Heart left ventricle (tissue), 16 donors: ENCODE measurements at regions of chr1 and their contacts with region 1.

Region 1: DNA sequence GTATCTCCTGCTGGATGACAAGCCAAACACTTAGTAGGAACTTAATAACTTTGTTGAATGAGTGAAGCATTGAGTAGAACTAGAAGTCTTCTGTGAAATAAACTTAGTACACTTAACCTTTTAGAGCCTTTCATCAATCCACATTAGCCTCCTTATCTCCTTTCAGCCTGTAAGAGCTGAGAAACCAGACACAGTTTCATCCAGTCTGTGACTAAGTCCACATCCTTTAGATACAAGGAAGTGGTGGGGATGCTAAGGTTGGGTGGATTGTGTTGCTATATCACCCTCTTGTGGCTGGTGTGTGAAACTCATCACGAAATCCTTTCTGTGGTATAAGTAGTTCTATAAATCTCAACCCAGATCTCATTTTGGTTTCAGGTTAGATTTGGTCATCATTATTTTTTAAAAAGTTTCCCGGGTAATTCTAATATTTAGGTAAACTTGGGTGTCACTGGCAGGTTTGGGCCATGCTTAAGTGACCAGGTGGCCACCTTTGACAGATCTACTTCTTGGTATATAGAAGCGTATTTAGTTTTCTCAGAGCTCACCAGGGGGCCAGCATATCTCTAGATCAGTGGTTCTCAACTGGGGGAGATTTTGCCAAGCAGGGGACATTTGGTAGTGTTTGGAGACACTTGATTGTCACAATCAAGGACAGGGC is 27.8 kb upstream of the CD84 start:
- DNase-seq: peak in 1 of 5 donors; percentile 38
- ATAC-seq: peak; percentile 58 to 87 (median 78)
- H3K4me3 ChIP-seq: no peak overlapping the region
- H3K27ac ChIP-seq: no peak overlapping the region
- H3K4me1 ChIP-seq: peaks cover 0 to 20% (median 0%) of the 10 kb centered on the region in 12 donors
- H3K27me3 ChIP-seq: peaks cover 0 to 3% (median 0%) of the 10 kb centered on the region in 9 donors
- CTCF ChIP-seq: peak; percentile 50 to 72 (median 62)
- POLR2A ChIP-seq: no peak

Region 2: DNA sequence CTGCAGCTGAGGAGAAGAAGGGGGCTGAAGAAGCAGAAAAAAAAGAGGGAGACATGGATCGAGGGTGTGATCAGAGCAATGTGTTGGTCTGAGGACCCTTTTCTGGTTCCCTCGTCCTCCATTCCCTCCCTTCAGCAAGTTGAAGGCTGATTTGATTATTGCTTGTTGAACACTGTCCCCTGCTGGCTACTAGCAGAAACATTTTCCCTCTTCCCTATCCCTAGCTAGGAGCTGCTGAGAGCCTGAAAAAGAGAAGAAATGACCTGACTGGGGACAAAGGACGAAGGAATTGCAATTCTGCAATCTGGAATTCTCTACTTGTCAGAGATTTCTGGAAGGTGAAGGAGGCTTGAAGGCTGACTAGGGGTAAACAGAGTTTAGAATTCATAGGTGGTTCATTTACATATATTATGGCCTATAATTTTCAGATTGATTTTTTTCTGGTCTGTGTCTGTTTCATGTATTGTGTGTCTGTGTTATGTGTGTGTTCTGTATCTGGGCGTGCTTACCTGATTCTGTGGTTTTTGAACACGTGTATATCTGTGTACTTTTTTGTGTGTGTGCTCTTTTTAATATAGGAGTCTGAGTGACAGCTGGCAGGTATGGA is 230.5 kb before region 1 on chr1:
- intact Hi-C with region 1: loop called in 1 of 10 experiments (anchors 2 kb)
- DNase-seq: no peak
- ATAC-seq: peak; percentile 56 to 86 (median 80)
- H3K4me3 ChIP-seq: peak overlapping the region in 1 of 12 donors; percentile 20
- H3K27ac ChIP-seq: peak overlapping the region in 4 of 12 donors; percentile 11 to 42 (median 40)
- H3K4me1 ChIP-seq: peaks cover 0 to 23% (median 10%) of the 10 kb centered on the region in 12 donors
- H3K27me3 ChIP-seq: peaks cover 0 to 3% (median 0%) of the 10 kb centered on the region in 9 donors
- CTCF ChIP-seq: peak; percentile 68 to 95 (median 88)
- POLR2A ChIP-seq: no peak

Region 3: DNA sequence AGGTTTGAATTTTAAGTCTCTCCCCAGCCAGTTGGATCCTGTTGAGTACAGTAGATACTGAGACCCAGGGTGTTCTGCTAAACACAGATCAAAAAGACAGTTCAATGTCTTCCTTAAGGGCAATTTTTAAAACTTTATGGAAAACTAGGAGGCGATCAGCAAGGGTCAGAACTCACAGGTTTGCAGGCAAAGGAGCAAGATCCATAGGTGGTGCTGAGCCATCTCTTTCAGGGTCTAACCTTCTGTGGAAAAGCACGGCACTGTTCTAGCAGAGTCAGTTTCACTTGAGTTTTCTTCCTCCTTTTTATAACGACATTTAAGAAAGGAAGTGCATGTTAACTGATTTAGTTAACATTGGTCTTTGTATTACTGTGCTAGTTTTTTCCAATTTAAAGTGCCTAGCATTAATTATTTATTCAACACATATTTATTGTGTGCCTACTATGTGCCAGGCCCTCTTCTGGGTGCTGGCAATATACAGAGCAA is 27.9 kb before region 1 on chr1 and contains the start of gene CD84:
- intact Hi-C with region 1: no loop called
- DNase-seq: no peak
- ATAC-seq: no peak
- H3K4me3 ChIP-seq: peak within 1 kb of the TSS in 9 of 12 donors; percentile 6 to 65 (median 29)
- H3K27ac ChIP-seq: peak within 1 kb of the TSS in 5 of 12 donors; percentile 18 to 93 (median 39)
- H3K4me1 ChIP-seq: peaks cover 0 to 50% (median 0%) of the 10 kb centered on the region in 12 donors
- H3K27me3 ChIP-seq: peaks cover 0 to 3% (median 0%) of the 10 kb centered on the region in 9 donors
- CTCF ChIP-seq: no peak
- POLR2A ChIP-seq: no peak
- total RNA-seq, gene CD84: 0.90 to 36.2 (median 1.4) TPM